Right cardiac atrium (tissue), 5 donors: ENCODE measurements at regions of chr2 and their contacts with region 1.

Region 1: GRCh38 chr2:173965329-173966025 is at the start of gene SP3:
- DNase-seq: peak; percentile 98 to 99 (median 99)
- ATAC-seq: peak; percentile 94
- H3K4me3 ChIP-seq: peak within 1 kb of the TSS; percentile 96
- H3K27ac ChIP-seq: peak within 1 kb of the TSS; percentile 100
- H3K4me1 ChIP-seq: peaks cover 2% of the 10 kb centered on the region
- H3K27me3 ChIP-seq: no peaks in the 10 kb centered on the region
- total RNA-seq, gene SP3: 44.8 to 52.2 (median 49.0) TPM

Region 2: GRCh38 chr2:174023591-174024523 is 58.4 kb after region 1 on chr2:
- intact Hi-C with region 1: loop called in 1 of 4 experiments (anchors 10 kb)
- DNase-seq: peak; percentile 68 to 80 (median 77)
- ATAC-seq: peak; percentile 47 to 73
- H3K4me3 ChIP-seq: no peak overlapping the region
- H3K27ac ChIP-seq: peak overlapping the region; percentile 71
- H3K4me1 ChIP-seq: peaks cover 10% of the 10 kb centered on the region
- H3K27me3 ChIP-seq: no peaks in the 10 kb centered on the region

Region 3: GRCh38 chr2:174039551-174040416 is 74.3 kb after region 1 on chr2:
- intact Hi-C with region 1: loop called in 1 of 4 experiments (anchors 10 kb)
- DNase-seq: peak; percentile 91 to 96 (median 92)
- ATAC-seq: peak; percentile 92 to 95
- H3K4me3 ChIP-seq: no peak overlapping the region
- H3K27ac ChIP-seq: peak overlapping the region; percentile 75
- H3K4me1 ChIP-seq: peaks cover 6% of the 10 kb centered on the region
- H3K27me3 ChIP-seq: no peaks in the 10 kb centered on the region

Region 4: GRCh38 chr2:174198822-174199564 is 233.5 kb after region 1 on chr2:
- intact Hi-C with region 1: no loop called
- DNase-seq: no peak
- ATAC-seq: no peak
- H3K4me3 ChIP-seq: no peak overlapping the region
- H3K27ac ChIP-seq: no peak overlapping the region
- H3K4me1 ChIP-seq: no peaks in the 10 kb centered on the region
- H3K27me3 ChIP-seq: no peaks in the 10 kb centered on the region

Region 5: DNA sequence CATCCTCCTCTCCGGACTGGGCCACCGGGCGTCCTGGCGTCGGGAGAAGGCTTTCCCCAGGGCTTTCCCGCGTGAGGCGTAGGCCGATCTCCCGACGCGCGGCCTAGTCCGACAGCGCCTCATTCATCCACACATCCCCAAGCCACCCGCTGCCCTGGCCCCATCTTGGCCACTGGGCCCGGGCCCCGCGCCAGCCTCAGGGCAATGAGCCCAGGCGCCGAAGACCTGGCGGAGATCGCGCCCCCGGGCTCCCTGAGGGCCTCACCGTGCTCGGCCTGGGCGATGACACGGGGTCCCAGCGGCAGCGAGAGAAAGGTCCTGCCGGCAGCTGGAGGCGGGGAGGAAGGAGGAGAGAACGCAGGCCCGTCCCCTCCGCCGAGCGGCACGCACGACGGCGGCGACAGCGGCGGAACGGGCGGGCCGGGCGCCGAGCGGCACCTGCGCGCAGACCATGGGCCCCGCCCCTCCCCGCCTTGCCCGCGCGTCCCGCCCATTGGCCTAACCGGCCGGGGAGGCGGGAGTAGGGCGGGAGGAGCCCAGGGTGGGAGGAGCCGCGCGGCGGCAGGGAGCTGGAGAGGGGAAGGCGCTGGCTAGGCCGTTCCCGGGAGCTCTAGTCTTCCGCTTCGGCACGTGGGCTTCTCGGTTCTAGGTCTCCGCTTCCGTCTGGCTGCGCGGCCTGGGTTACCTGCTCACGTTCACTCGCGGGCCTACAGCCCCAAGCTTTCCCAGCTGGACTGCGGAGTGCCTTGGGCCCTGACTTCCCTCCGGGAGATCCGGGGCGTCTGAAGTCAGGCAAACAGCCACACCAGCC is 282.9 kb after region 1 on chr2 and contains the start of gene OLA1:
- intact Hi-C with region 1: no loop called
- DNase-seq: peak; percentile 95 to 98 (median 98)
- ATAC-seq: peak; percentile 100
- H3K4me3 ChIP-seq: peak within 1 kb of the TSS; percentile 77
- H3K27ac ChIP-seq: peak within 1 kb of the TSS; percentile 87
- H3K4me1 ChIP-seq: no peaks in the 10 kb centered on the region
- H3K27me3 ChIP-seq: no peaks in the 10 kb centered on the region
- total RNA-seq, gene OLA1: 66.9 to 84.4 (median 73.0) TPM